MCF 10A (cell line): ENCODE measurements at regions of chr2 and their contacts with region 1.

Region 1: DNA sequence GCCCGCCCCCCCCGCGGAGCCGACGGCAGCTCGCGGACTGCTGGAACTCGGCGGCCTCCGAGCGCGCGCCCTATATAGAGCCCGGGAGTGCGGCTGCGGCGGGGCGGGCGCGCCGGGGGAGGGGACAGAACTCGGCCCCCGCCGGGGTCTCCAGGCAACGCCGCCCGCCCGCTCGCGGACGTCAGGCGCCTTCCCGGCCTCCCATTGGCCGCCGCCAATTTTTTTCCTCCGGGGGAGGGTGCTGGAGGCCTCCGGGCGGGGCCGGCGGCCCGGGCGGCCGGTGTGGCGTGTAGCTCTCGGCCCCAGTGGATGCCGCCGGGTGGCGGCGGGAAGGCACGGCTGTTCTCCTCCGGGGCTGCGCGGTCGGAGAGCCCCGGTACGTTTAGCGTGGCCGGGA is at the start of gene ZFP36L2:
- DNase-seq: peak; percentile 95
- H3K4me3 Mint-ChIP-seq: peak within 1 kb of the TSS; percentile 93
- H3K27ac Mint-ChIP-seq: peak within 1 kb of the TSS; percentile 83
- H3K4me1 Mint-ChIP-seq: peaks cover 17% of the 10 kb centered on the region
- H3K27me3 Mint-ChIP-seq: no peaks in the 10 kb centered on the region
- CTCF ChIP-seq: no peak
- total RNA-seq, gene ZFP36L2: 107 and 162 TPM in 2 replicates

Region 2: GRCh38 chr2:42964439-42965083 is 262.0 kb before region 1 on chr2:
- CTCF ChIA-PET with region 1: interaction called, 10 read pairs
- POLR2A ChIA-PET with region 1: interaction called, 3 read pairs
- intact Hi-C with region 1: no loop called
- DNase-seq: peak; percentile 90
- H3K4me3 Mint-ChIP-seq: no peak overlapping the region
- H3K27ac Mint-ChIP-seq: peak overlapping the region; percentile 80
- H3K4me1 Mint-ChIP-seq: peaks cover 29% of the 10 kb centered on the region
- H3K27me3 Mint-ChIP-seq: no peaks in the 10 kb centered on the region
- CTCF ChIP-seq: no peak

Region 3: DNA sequence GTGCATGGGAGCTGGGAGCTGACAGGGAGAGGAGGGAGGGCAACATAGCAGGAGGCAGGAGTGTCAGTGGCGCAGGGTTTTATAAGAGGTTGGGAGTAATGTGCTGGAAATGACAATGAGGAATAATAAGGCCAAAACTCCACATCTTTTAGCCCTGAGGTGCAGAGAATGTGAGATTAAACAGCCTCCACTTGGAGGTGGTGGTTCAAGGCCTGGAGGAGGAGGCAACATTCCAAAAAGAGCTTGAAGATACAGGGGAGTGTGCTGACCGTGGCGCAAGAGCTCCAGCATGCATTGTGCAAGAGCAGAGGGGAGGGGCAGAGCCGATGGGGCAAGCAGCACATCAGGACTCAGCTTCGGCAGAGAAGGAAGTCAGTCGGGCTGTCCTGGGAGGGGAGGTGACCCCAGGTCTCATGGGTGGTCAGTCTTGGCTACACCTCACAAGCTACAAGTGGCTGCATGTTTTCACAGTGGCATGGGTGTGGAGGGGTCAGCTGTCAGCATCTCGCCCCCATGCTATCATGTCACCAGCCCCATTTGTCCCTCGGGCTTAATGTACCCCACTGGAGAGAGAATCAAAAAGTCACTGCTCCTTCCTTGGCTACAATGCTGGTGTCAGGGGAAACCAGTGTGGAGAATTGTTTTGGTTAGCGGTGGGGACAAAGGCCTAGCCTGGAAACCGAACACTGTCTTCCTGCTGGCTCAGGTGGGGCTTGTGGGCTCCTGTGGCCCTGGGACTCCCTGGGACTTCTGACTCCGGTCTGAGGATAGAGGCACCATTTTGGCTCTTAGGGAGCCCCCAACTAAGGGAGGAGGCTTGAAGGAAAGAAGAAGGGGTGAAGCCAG is 208.2 kb before region 1 on chr2:
- CTCF ChIA-PET with region 1: interaction called, 4 read pairs
- POLR2A ChIA-PET with region 1: interaction called, 18 read pairs
- intact Hi-C with region 1: no loop called
- DNase-seq: peak; percentile 93
- H3K4me3 Mint-ChIP-seq: peak overlapping the region; percentile 31
- H3K27ac Mint-ChIP-seq: peak overlapping the region; percentile 83
- H3K4me1 Mint-ChIP-seq: peaks cover 30% of the 10 kb centered on the region
- H3K27me3 Mint-ChIP-seq: no peaks in the 10 kb centered on the region
- CTCF ChIP-seq: no peak

Region 4: DNA sequence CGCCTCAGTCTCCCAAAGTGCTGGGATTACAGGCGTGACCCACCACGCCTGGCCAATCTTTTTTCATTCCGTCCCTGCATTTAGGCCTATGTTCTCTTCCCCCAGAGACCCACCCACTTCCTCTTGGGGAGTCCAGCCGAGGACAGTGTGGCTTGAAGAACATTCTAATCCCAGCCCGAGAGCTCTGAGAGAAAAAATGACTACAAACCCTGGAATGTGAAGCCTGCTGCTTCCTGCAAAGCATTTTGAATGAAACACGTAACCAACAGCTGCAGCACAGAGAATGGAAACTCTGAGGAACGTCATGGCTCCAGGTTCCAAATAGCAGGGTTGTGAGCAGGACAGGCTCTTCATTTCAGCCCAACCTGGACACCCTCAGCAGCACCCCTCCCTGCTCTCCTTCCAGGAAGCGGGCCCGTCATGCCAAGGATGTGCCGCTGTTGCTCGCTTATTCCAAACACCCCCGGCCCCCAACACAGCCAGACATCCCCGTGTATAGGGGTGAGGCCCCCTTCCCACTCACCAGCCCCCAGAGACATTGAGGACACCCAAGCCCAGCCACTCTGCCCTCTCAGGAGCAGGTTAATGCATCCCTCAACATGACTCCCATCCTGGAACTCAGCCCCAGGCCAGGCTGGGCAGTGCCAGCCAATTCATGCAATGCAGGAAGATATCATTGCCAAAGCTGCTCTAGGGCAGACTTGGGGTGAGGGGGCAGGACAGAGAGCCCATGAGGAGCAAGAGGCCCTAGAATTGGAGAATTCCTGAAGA is 139.9 kb before region 1 on chr2:
- CTCF ChIA-PET with region 1: interaction called, 4 read pairs
- POLR2A ChIA-PET with region 1: interaction called, 54 read pairs
- intact Hi-C with region 1: loop called (anchors 5 kb)
- DNase-seq: peak; percentile 98
- H3K4me3 Mint-ChIP-seq: peak overlapping the region; percentile 48
- H3K27ac Mint-ChIP-seq: peak overlapping the region; percentile 94
- H3K4me1 Mint-ChIP-seq: peaks cover 60% of the 10 kb centered on the region
- H3K27me3 Mint-ChIP-seq: no peaks in the 10 kb centered on the region
- CTCF ChIP-seq: no peak

Region 5: GRCh38 chr2:43324259-43325106 is 97.9 kb after region 1 on chr2:
- CTCF ChIA-PET with region 1: no interaction called
- POLR2A ChIA-PET with region 1: no interaction called
- intact Hi-C with region 1: no loop called
- DNase-seq: no peak
- H3K4me3 Mint-ChIP-seq: no peak overlapping the region
- H3K27ac Mint-ChIP-seq: no peak overlapping the region
- H3K4me1 Mint-ChIP-seq: peaks cover 6% of the 10 kb centered on the region
- H3K27me3 Mint-ChIP-seq: no peaks in the 10 kb centered on the region
- CTCF ChIP-seq: no peak

Region 6: GRCh38 chr2:43455731-43456642 is 229.4 kb after region 1 on chr2:
- CTCF ChIA-PET with region 1: interaction called, 12 read pairs
- POLR2A ChIA-PET with region 1: interaction called, 10 read pairs
- intact Hi-C with region 1: no loop called
- DNase-seq: peak; percentile 48
- H3K4me3 Mint-ChIP-seq: no peak overlapping the region
- H3K27ac Mint-ChIP-seq: peak overlapping the region; percentile 78
- H3K4me1 Mint-ChIP-seq: peaks cover 47% of the 10 kb centered on the region
- H3K27me3 Mint-ChIP-seq: no peaks in the 10 kb centered on the region
- CTCF ChIP-seq: no peak

Region 7: DNA sequence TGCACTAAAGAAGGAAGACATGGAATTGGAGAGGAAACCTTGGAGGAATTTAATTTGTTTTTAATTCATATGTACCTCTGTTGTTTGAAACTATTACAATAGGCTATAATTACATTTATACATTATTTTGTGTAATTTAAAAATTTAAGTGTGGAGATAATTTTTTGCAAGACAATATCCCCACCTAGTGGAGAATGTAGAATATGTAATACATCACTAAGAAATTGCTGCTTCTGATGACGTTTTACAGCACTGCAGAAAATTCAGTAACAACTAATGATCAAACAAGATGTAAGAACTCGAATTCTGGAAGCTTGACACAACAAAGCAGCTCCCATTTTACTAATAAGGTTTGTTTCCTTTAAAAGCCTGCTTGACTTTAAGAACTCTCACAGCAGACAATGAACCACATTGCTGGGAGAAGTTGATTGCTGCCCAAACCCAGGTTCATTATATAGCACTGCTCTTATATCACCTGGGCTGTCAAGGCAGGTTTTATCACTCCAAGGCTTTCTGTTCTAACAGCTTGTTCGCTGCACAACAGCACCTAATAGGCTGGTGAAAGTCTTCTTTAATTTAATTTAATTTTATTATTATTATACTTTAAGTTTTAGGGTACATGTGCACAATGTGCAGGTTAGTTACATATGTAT is 315.9 kb after region 1 on chr2:
- CTCF ChIA-PET with region 1: interaction called, 28 read pairs
- POLR2A ChIA-PET with region 1: interaction called, 274 read pairs
- intact Hi-C with region 1: loop called (anchors 1 kb)
- DNase-seq: peak; percentile 64
- H3K4me3 Mint-ChIP-seq: no peak overlapping the region
- H3K27ac Mint-ChIP-seq: no peak overlapping the region
- H3K4me1 Mint-ChIP-seq: peaks cover 14% of the 10 kb centered on the region
- H3K27me3 Mint-ChIP-seq: no peaks in the 10 kb centered on the region
- CTCF ChIP-seq: peak; percentile 40